ENCODE measurements at regions of chr1 and their contacts with region 1.

Region 1: GRCh38 chr1:183030053-183030452 is 6.8 kb downstream of the LAMC1 start:
- DNase-seq: peak; percentile 42 to 63
- H3K4me3 ChIP-seq: no peak overlapping the region
- H3K4me3 Mint-ChIP-seq: peak overlapping the region; percentile 32
- H3K27ac Mint-ChIP-seq: peak overlapping the region; percentile 63
- H3K4me1 ChIP-seq: peaks cover 64% of the 10 kb centered on the region
- H3K4me1 Mint-ChIP-seq: peaks cover 43% of the 10 kb centered on the region
- H3K27me3 ChIP-seq: no peaks in the 10 kb centered on the region
- H3K27me3 Mint-ChIP-seq: no peaks in the 10 kb centered on the region
- CTCF ChIP-seq: no peak

Region 2: GRCh38 chr1:183051546-183051945 is 21.5 kb after region 1 on chr1:
- CTCF ChIA-PET with region 1: no interaction called
- POLR2A ChIA-PET with region 1: no interaction called
- intact Hi-C with region 1: no loop called
- DNase-seq: no peak
- H3K4me3 ChIP-seq: no peak overlapping the region
- H3K4me3 Mint-ChIP-seq: no peak overlapping the region
- H3K27ac Mint-ChIP-seq: no peak overlapping the region
- H3K4me1 ChIP-seq: peaks cover 5% of the 10 kb centered on the region; the same call in 1 of the 2 replicates
- H3K4me1 Mint-ChIP-seq: peaks cover 25% of the 10 kb centered on the region
- H3K27me3 ChIP-seq: no peaks in the 10 kb centered on the region
- H3K27me3 Mint-ChIP-seq: no peaks in the 10 kb centered on the region
- CTCF ChIP-seq: no peak

Region 3: GRCh38 chr1:183089025-183089639 is 59.1 kb after region 1 on chr1:
- CTCF ChIA-PET with region 1: no interaction called
- POLR2A ChIA-PET with region 1: no interaction called
- intact Hi-C with region 1: loop called (anchors 2 kb)
- DNase-seq: peak; percentile 54 to 55
- H3K4me3 ChIP-seq: no peak overlapping the region
- H3K4me3 Mint-ChIP-seq: peak overlapping the region; percentile 20
- H3K27ac Mint-ChIP-seq: peak overlapping the region; percentile 52
- H3K4me1 ChIP-seq: peaks cover 93% of the 10 kb centered on the region
- H3K4me1 Mint-ChIP-seq: peaks cover 75% of the 10 kb centered on the region
- H3K27me3 ChIP-seq: no peaks in the 10 kb centered on the region
- H3K27me3 Mint-ChIP-seq: no peaks in the 10 kb centered on the region
- CTCF ChIP-seq: no peak

Region 4: DNA sequence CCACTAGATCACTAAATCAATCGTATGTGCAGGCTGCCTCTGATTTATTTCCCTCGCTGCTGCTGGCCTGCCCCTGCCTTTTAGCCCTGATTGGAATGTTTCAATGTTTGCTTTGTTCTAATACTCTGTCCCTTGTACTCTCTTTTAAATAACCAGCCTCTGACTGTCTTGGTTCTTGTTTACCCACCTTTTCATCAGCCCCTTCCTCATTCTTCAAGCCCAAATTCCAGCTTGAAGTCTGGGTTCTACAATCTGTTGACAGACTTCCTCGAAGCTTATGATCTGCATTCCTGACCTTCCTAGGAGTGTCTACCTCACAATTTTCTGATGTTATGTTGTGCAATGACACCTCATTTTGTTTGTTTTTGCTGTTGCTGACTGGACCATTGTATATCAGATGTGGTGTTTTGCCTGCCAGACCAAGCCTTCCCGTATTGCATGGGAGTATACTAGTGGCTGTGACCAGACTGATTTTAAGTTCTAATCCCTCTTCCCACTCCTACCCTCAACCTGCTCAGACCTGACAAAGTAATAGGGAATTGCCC is 669.6 kb after region 1 on chr1:
- CTCF ChIA-PET with region 1: no interaction called
- POLR2A ChIA-PET with region 1: no interaction called
- intact Hi-C with region 1: no loop called
- DNase-seq: peak; percentile 90 to 91
- H3K4me3 ChIP-seq: no peak overlapping the region
- H3K4me3 Mint-ChIP-seq: peak overlapping the region; percentile 70
- H3K27ac Mint-ChIP-seq: peak overlapping the region; percentile 93
- H3K4me1 ChIP-seq: peaks cover 61% of the 10 kb centered on the region
- H3K4me1 Mint-ChIP-seq: peaks cover 41% of the 10 kb centered on the region
- H3K27me3 ChIP-seq: no peaks in the 10 kb centered on the region
- H3K27me3 Mint-ChIP-seq: no peaks in the 10 kb centered on the region
- CTCF ChIP-seq: no peak